K562 (cell line): ENCODE measurements at regions of chr6 and their contacts with region 1.

Region 1: GRCh38 chr6:15691250-15691869 is 28.5 kb upstream of the DTNBP1 start:
- DNase-seq: peak; percentile 90 to 95 (median 92)
- ATAC-seq: peak; percentile 100
- H3K4me3 ChIP-seq: no peak overlapping the region
- H3K27ac ChIP-seq: no peak overlapping the region
- H3K4me1 ChIP-seq: peaks cover 0 to 11% of the 10 kb centered on the region in 2 experiments; a peak in 2 of 5 replicates
- H3K27me3 ChIP-seq: no peaks in the 10 kb centered on the region
- CTCF ChIP-seq: peak; percentile 100
- EP300 ChIP-seq: peak; percentile 39; the same call in 1 of the 2 replicates
- POLR2A ChIP-seq: no peak
- RAD21 ChIP-seq: peak; percentile 100

Region 2: DNA sequence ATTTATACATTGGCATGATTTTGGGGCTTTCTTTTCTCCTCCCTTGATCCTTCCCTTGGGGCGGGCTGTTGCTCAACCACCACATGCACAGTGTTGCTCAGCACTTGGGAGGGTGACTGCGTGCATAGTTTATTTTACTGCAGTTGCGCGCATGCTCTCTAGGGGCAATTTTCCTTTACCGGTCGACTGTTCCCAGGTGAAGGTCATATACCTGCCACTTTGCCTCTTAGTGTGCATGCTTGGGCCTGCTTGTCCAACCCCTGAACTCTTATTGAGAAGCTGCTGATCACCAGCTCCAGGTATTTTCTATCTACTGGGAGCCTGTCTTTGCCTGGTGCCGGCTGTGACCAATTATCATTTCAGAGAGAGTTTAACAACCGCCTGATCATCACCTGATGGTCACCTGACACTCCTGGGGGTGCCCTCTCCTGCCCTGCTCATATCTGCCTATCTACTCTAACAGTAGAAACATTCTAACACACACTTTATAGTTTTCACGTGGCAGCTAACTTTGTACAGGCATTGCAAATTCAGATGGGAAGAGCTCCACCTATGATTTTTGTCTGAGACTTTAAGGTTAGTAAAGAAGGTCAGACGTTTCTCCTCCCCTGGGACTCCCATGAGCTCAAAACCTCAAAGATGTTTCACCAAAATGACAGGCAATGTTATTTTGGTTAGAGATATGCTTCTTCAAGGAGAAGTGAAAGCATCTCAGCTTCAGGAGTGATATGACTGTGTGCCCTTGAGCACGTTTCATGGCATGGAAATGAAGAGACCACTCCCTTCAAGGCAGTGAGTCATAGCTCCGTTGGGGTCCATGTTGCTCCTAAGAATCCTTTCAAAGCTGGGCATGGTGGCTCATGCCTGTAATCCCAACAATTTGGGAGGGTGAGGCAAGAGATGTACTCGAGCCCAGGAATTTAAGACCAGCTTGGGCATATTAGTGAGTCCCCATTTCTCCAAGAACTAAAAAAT is 210.1 kb after region 1 on chr6:
- CTCF ChIA-PET with region 1: interaction called, 4 read pairs
- POLR2A ChIA-PET with region 1: no interaction called
- in situ Hi-C with region 1: no loop called
- intact Hi-C with region 1: loop called (anchors 5 kb)
- DNase-seq: peak in 3 of 4 experiments; percentile 33 to 72 (median 54)
- ATAC-seq: peak; percentile 52
- H3K4me3 ChIP-seq: no peak overlapping the region
- H3K27ac ChIP-seq: peak overlapping the region; percentile 83
- H3K4me1 ChIP-seq: peaks cover 42 to 74% of the 10 kb centered on the region in 2 experiments
- H3K27me3 ChIP-seq: no peaks in the 10 kb centered on the region
- CTCF ChIP-seq: 0 out of 6 replicates have a peak, but pooled peaks of 2 of the 3 experiments have one; percentile 12 to 20
- EP300 ChIP-seq: peak; percentile 49
- POLR2A ChIP-seq: 0 out of 2 replicates have a peak, but pooled peaks have one; percentile 31
- RAD21 ChIP-seq: peak in 1 of 2 experiments; percentile 8; a peak in 1 of 4 replicates

Region 3: DNA sequence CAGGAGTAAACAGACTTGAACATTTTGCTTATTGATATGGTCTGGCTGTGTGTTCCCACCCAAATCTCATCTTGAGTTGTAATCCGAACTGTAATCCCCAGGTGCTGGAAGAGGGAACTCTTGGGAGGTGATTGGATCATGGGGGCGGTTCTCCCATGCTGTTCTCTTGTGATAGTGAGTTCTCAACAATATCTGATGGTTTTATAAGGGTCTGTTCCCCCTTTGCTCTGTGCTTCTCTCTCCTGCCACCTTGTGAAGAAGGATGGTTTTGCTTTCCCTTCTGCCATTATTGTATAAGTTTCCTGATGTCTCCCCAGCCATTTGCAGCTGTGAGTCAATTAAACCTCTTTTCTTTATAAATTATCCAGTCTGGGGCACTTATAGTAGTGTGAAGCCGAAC is 477.5 kb after region 1 on chr6:
- CTCF ChIA-PET with region 1: interaction called, 28 read pairs
- POLR2A ChIA-PET with region 1: no interaction called
- in situ Hi-C with region 1: loop called (anchors 10 kb)
- intact Hi-C with region 1: loop called (anchors 1 kb)
- DNase-seq: peak in 2 of 4 experiments; percentile 38 to 82
- ATAC-seq: peak; percentile 92
- H3K4me3 ChIP-seq: no peak overlapping the region
- H3K27ac ChIP-seq: no peak overlapping the region
- H3K4me1 ChIP-seq: peaks cover 0 to 17% of the 10 kb centered on the region in 2 experiments; a peak in 4 of 5 replicates
- H3K27me3 ChIP-seq: no peaks in the 10 kb centered on the region
- CTCF ChIP-seq: peak; percentile 76 to 86 (median 78)
- EP300 ChIP-seq: peak; percentile 69
- POLR2A ChIP-seq: no peak
- RAD21 ChIP-seq: peak; percentile 82 to 94

Region 4: GRCh38 chr6:16206595-16207037 is 515.3 kb after region 1 on chr6:
- CTCF ChIA-PET with region 1: interaction called, 66 read pairs
- POLR2A ChIA-PET with region 1: no interaction called
- in situ Hi-C with region 1: no loop called
- intact Hi-C with region 1: loop called (anchors 1 kb)
- DNase-seq: peak; percentile 79 to 84 (median 79)
- ATAC-seq: peak; percentile 88
- H3K4me3 ChIP-seq: no peak overlapping the region
- H3K27ac ChIP-seq: no peak overlapping the region; the same call in 1 of the 3 replicates
- H3K4me1 ChIP-seq: peaks cover 8 to 14% of the 10 kb centered on the region in 2 experiments; a peak in 4 of 5 replicates
- H3K27me3 ChIP-seq: no peaks in the 10 kb centered on the region
- CTCF ChIP-seq: peak; percentile 88 to 98 (median 96)
- EP300 ChIP-seq: no peak; the same call in 1 of the 2 replicates
- POLR2A ChIP-seq: no peak
- RAD21 ChIP-seq: peak; percentile 97

Region 5: DNA sequence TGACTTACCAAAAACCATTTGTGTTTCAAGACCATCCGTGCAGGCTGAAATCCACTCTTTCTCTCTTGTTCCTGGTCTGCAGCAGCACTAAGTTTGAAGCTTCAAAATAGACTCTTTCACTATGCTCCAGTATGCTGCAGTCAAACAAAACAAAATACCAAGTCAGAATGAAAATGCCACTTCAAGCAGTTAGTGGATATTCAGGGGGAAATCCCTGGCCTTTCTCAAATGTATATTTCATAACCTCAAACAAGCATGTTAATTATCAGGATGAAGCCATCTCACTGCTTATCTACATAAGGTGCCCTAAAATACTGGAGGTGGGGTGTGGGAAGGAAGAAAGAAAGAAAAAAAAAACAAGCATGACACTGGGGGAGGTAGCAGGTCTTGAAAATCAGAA is 966.4 kb after region 1 on chr6:
- CTCF ChIA-PET with region 1: no interaction called
- POLR2A ChIA-PET with region 1: no interaction called
- in situ Hi-C with region 1: no loop called
- intact Hi-C with region 1: no loop called
- DNase-seq: no peak
- ATAC-seq: no peak
- H3K4me3 ChIP-seq: no peak overlapping the region
- H3K27ac ChIP-seq: no peak overlapping the region
- H3K4me1 ChIP-seq: no peaks in the 10 kb centered on the region
- H3K27me3 ChIP-seq: peaks cover 0 to 4% of the 10 kb centered on the region in 2 experiments; a peak in 2 of 5 replicates
- CTCF ChIP-seq: no peak
- EP300 ChIP-seq: no peak
- POLR2A ChIP-seq: no peak
- RAD21 ChIP-seq: no peak